ENCODE measurements at regions of chr7 and their contacts with region 1.

Region 1: GRCh38 chr7:22624795-22625194 is 102.2 kb upstream of the IL6 start:
- DNase-seq: no peak
- ATAC-seq: no peak
- H3K4me3 ChIP-seq: no peak overlapping the region
- H3K27ac ChIP-seq: no peak overlapping the region
- H3K4me1 ChIP-seq: no peaks in the 10 kb centered on the region
- H3K27me3 ChIP-seq: no peaks in the 10 kb centered on the region
- CTCF ChIP-seq: no peak

Region 2: DNA sequence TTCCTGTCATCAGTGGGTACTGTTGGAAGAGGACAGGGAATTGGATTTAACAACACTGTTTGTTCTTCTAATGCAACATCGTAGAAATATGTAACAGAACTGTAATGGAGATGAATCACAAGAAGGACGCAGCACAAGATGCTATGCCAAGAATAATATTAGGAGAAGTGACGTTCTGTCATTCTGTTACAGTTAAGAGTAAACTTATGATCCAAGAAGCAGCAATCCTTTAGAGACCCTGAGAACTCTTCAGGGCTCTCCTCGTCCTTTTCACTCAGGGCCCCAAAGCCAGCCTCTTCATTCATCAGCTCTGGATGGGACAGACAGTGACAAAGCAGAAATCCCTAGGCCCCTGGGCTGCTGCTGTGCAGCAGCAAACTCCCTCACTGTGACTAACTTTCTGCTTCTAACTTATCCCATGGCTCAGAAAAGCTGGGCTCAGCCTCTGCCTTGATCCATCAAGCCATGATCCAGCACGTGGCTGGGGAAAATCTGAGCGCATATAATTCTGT is 93.5 kb after region 1 on chr7:
- CTCF ChIA-PET with region 1: no interaction called
- POLR2A ChIA-PET with region 1: interaction called, 16 read pairs
- in situ Hi-C with region 1: no loop called
- intact Hi-C with region 1: no loop called
- DNase-seq: peak; percentile 98
- ATAC-seq: peak; percentile 92
- H3K4me3 ChIP-seq: peak overlapping the region in 1 of 2 experiments; percentile 30; a peak in 3 of 4 replicates
- H3K27ac ChIP-seq: peak overlapping the region; percentile 83
- H3K4me1 ChIP-seq: peaks cover 31% of the 10 kb centered on the region
- H3K27me3 ChIP-seq: no peaks in the 10 kb centered on the region
- CTCF ChIP-seq: no peak

Measured in Panc1 (cell line).